ENCODE measurements at regions of chr10 and their contacts with region 1.

Region 1: DNA sequence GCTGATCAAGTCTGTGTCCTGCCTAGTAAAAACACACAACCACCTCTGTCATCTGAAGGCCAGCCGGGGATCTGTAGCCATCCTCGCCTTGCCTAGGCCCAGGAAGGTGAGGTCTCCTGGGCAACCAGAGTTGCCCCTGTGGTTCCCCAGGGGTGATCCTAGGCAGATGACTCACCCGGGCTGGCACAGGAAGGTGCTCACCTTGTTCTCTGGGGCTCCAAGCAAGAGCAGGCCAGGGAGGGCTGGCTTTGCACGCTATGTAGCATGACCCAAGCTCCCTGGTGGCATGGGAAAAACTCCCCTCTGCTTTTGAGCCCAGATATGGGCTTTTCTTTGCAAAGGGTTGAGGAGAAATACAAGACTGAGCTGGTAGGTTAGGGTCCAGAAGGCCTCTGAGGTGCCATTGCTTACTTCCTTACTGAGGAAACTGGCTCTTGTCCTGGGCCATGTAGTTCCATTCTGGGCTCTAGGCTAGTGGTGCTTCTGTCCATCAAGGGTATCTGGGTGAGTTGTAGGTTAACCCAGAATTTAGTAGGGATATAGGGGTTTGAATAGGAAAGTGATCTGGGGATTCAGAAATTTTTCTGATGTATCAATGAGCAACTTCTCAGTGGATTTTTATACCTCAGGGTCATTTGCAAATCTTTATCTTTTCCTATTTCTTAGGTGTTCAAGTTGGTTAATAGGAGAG is 112.0 kb downstream of the NT5C2 start:
- DNase-seq: no peak

Region 2: GRCh38 chr10:101552442-101552841 is 1528.6 kb before region 1 on chr10:
- intact Hi-C with region 1: no loop called
- DNase-seq: no peak

Region 3: GRCh38 chr10:103192451-103193106 is 111.5 kb after region 1 on chr10:
- intact Hi-C with region 1: loop called (anchors 10 kb)
- DNase-seq: peak; percentile 28 to 91 (median 58)